PC-9 (cell line): ENCODE measurements at regions of chr4 and their contacts with region 1.

Region 1: DNA sequence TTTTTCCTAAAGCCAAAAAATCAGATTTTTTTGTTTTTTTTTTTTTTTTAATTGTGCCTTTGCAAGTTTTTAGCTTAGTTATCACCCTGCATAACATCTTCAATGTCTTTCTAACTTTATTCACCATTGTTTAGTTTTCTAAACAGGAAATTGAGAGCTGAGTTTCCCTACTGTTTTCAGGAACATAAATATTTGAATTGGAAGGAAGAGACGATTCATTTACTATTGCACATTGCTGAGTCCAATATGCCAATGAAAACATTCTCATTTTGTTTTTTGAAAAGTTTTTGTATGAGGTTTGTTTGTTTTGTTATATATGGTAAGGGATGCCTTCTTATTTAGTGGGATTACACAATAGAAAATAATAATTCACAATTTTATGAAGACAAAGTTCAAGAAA is 148.4 kb downstream of the ANKRD50 start:
- DNase-seq: no peak
- H3K4me3 ChIP-seq: no peak overlapping the region
- H3K27ac ChIP-seq: no peak overlapping the region
- H3K4me1 ChIP-seq: no peaks in the 10 kb centered on the region
- H3K27me3 ChIP-seq: no peaks in the 10 kb centered on the region
- CTCF ChIP-seq: no peak

Region 2: GRCh38 chr4:124167602-124168001 is 396.5 kb before region 1 on chr4:
- CTCF ChIA-PET with region 1: no interaction called
- POLR2A ChIA-PET with region 1: no interaction called
- intact Hi-C with region 1: loop called (anchors 5 kb)
- DNase-seq: no peak
- H3K4me3 ChIP-seq: no peak overlapping the region
- H3K27ac ChIP-seq: no peak overlapping the region
- H3K4me1 ChIP-seq: no peaks in the 10 kb centered on the region
- H3K27me3 ChIP-seq: no peaks in the 10 kb centered on the region
- CTCF ChIP-seq: no peak